ENCODE measurements at regions of chr11 and their contacts with region 1.

Region 1: DNA sequence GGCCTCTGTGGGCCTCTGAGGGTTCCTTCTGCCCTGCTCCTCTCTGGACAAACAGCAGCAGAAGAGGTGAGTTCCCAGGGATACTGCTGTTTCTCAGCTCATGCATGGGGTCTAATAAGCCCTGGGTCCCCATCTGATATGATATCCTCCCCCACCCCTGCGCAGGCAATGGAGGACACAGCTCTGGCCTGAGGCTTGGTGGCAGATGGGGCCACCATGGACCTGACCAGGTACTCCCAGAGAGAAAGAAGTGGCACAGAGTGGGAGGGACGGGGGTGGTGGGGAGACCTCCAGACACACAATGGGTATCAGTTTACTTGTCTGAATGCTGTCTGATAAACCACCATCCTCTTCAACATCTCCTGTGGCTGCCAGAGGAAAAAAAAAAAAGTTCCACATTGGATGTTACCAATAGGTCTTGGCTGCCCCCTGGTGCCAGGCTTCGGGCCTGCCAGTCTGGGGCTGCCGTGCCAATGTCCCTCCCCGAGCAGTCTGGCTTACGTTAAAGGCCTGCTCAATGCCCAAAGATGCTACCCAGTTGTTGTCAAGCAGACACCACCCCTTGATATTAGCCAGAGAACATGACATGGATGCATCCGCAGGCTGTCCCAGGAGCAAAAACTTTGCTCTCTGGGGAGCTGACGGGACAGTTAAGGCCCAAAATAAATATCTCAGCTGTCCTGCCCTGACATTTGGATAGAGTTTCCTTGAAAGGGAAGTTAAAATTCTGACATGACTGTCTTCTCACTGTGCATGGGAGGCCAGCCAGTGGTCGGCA is 27.9 kb upstream of the ABCC8 start:
- DNase-seq: peak; percentile 88
- ATAC-seq: peak; percentile 62

Region 2: GRCh38 chr11:17230867-17231851 is 273.4 kb before region 1 on chr11:
- intact Hi-C with region 1: loop called (anchors 1 kb)
- DNase-seq: no peak
- ATAC-seq: no peak

Region 3: GRCh38 chr11:17384002-17384511 is 120.5 kb before region 1 on chr11:
- intact Hi-C with region 1: loop called (anchors 1 kb)
- DNase-seq: no peak
- ATAC-seq: peak; percentile 30

Region 4: GRCh38 chr11:17457396-17458173 is 46.9 kb before region 1 on chr11:
- intact Hi-C with region 1: no loop called
- DNase-seq: no peak
- ATAC-seq: no peak

Region 5: GRCh38 chr11:17572359-17572690 is 67.8 kb after region 1 on chr11:
- intact Hi-C with region 1: no loop called
- DNase-seq: no peak
- ATAC-seq: no peak